ENCODE measurements at regions of chr1 and their contacts with region 1.

Region 1: GRCh38 chr1:38020396-38020795 is 7.9 kb downstream of the UTP11 start:
- DNase-seq: no peak
- ATAC-seq: no peak

Region 2: GRCh38 chr1:37989361-37989930 is 30.9 kb before region 1 on chr1:
- intact Hi-C with region 1: loop called in 1 of 2 experiments (anchors 5 kb)
- DNase-seq: peak; percentile 41 to 60
- ATAC-seq: peak; percentile 42

Measured in left colon (tissue), 2 donors.